Endothelial cell of umbilical vein (primary cell): ENCODE measurements at regions of chr7 and their contacts with region 1.

Region 1: GRCh38 chr7:136857573-136857972 is 10.9 kb upstream of the CHRM2 start:
- DNase-seq: peak; percentile 51
- H3K4me3 ChIP-seq: no peak overlapping the region
- H3K27ac ChIP-seq: no peak overlapping the region
- H3K4me1 ChIP-seq: peaks cover 14% of the 10 kb centered on the region
- H3K27me3 ChIP-seq: no peaks in the 10 kb centered on the region
- CTCF ChIP-seq: no peak
- POLR2A ChIP-seq: no peak

Region 2: DNA sequence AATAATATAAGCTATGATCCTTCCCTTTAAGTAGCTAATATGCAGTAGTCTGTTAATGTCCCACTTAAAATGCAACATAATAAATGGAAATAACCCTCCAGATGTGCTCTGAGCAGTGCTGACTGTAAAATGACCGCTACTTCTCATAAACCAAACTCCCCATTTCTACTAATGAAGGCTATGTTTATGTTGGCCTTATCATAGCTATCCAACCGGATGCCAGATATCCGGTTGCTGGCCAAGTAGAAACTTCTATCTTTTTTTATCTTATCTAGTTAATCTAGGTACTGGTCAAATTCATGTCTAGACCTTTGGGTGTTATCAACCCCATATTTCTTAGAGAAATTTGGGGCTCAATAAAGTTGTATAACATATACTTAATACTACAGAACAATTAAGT is 67.5 kb after region 1 on chr7:
- CTCF ChIA-PET with region 1: interaction called, 4 read pairs
- POLR2A ChIA-PET with region 1: no interaction called
- dilution Hi-C with region 1: no loop called
- intact Hi-C with region 1: loop called (anchors 1 kb)
- DNase-seq: peak; percentile 93
- H3K4me3 ChIP-seq: peak overlapping the region in 1 of 3 experiments; percentile 43
- H3K27ac ChIP-seq: peak overlapping the region; percentile 70
- H3K4me1 ChIP-seq: peaks cover 30% of the 10 kb centered on the region
- H3K27me3 ChIP-seq: no peaks in the 10 kb centered on the region
- CTCF ChIP-seq: no peak
- POLR2A ChIP-seq: peak; percentile 60